ENCODE measurements at regions of chr1 and their contacts with region 1.

Region 1: DNA sequence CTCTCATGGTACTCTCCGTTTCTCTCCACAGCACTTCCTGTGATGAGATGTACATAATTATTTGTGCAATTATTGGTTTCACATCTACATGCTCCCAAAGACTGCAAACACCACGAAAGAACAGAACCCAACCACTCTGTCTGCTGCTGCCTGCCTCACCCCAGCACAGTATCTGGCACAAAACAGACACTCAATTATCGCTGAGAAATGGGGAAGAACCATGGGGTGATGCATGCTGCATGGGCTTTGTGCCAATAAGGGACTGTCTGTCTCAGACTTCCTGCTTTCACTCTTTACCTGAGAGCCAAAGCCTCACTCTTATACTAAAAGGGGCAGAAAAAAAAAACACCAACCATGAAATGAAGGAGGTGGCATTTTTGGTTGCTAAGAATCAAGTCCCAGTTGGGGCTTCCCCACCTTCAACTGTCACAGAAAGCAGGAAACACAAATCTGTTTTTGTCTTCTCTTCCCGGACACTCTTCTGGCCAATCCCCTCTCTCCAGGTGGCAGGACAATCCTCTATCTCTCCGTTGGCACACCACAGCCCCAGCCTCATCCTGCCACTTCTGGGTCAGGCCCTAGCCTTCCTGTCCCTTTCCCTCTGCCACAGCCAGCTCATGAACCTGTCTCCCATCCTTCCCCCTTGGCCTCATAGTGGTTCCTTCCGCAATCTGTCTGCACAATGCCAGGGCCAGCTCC is 82.0 kb downstream of the TGFBR3 start:
- DNase-seq: peak in 2 of 4 experiments; percentile 65 to 83
- ATAC-seq: peak; percentile 75
- H3K4me3 ChIP-seq: no peak overlapping the region
- H3K27ac ChIP-seq: peak overlapping the region; percentile 60
- H3K4me1 ChIP-seq: peaks cover 27 to 29% of the 10 kb centered on the region in 2 experiments
- H3K27me3 ChIP-seq: no peaks in the 10 kb centered on the region
- CTCF ChIP-seq: no peak
- EP300 ChIP-seq: peak; percentile 75; the same call in 1 of the 2 replicates
- POLR2A ChIP-seq: no peak
- RAD21 ChIP-seq: no peak

Region 2: GRCh38 chr1:91500756-91501522 is 303.1 kb before region 1 on chr1 and contains the start of gene CDC7:
- CTCF ChIA-PET with region 1: no interaction called
- POLR2A ChIA-PET with region 1: no interaction called
- in situ Hi-C with region 1: no loop called
- intact Hi-C with region 1: no loop called
- DNase-seq: peak; percentile 95 to 97 (median 96)
- ATAC-seq: peak; percentile 83
- H3K4me3 ChIP-seq: peak within 1 kb of the TSS; percentile 56
- H3K27ac ChIP-seq: peak within 1 kb of the TSS; percentile 97
- H3K4me1 ChIP-seq: peaks cover 0 to 43% of the 10 kb centered on the region in 2 experiments
- H3K27me3 ChIP-seq: no peaks in the 10 kb centered on the region
- CTCF ChIP-seq: peak; percentile 51 to 59 (median 55); a peak in 5 of 6 replicates
- EP300 ChIP-seq: peak; percentile 2; the same call in 1 of the 2 replicates
- POLR2A ChIP-seq: peak; percentile 92
- RAD21 ChIP-seq: peak; percentile 24 to 28
- polyA plus RNA-seq, gene CDC7: 22.3 to 66.8 TPM

Region 3: DNA sequence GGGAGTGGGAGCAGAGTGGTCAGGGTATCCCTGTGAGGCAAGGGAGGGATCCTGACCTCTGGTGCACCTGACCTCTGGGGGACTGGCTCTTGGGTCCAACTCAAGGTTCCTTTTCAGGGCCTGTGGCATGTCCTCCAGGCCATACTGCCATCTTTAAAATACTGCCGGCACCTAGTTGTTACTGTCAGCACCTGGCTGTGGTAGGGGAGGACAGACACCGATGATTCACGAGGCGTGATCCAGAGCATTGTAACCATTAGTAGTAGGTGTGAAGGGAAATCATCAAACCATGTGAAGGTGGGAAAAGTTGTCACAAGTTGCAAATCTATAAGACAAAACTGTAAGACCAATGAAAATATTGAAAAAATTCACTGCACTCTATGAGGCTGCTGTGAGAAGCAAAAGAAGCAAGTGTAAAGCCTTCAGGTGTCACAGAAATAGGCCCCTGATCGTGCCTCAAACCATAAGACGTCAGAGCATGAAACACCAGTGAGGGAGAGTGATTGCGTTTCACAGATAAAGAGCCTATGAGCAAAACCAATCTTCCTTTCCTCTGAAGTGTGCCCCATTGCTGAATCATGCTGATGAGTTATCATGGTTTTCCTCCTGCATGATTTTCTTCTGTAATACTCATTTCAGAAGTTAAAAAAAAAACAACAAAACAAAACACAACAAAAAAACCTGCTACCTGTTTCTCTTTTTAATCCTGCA is 248.0 kb before region 1 on chr1:
- CTCF ChIA-PET with region 1: no interaction called
- POLR2A ChIA-PET with region 1: no interaction called
- in situ Hi-C with region 1: no loop called
- intact Hi-C with region 1: loop called (anchors 1 kb)
- DNase-seq: peak; percentile 33 to 85 (median 62)
- ATAC-seq: peak; percentile 93
- H3K4me3 ChIP-seq: no peak overlapping the region
- H3K27ac ChIP-seq: peak overlapping the region; percentile 56; the same call in 2 of the 3 replicates
- H3K4me1 ChIP-seq: peaks cover 14 to 29% of the 10 kb centered on the region in 2 experiments
- H3K27me3 ChIP-seq: no peaks in the 10 kb centered on the region
- CTCF ChIP-seq: no peak
- EP300 ChIP-seq: peak; percentile 82
- POLR2A ChIP-seq: no peak
- RAD21 ChIP-seq: no peak; a peak in 1 of 4 replicates

Region 4: GRCh38 chr1:91617285-91617765 is 186.7 kb before region 1 on chr1:
- CTCF ChIA-PET with region 1: no interaction called
- POLR2A ChIA-PET with region 1: no interaction called
- in situ Hi-C with region 1: no loop called
- intact Hi-C with region 1: loop called (anchors 5 kb)
- DNase-seq: peak in 3 of 4 experiments; percentile 38 to 63 (median 46)
- ATAC-seq: peak; percentile 97
- H3K4me3 ChIP-seq: no peak overlapping the region
- H3K27ac ChIP-seq: no peak overlapping the region
- H3K4me1 ChIP-seq: no peaks in the 10 kb centered on the region
- H3K27me3 ChIP-seq: no peaks in the 10 kb centered on the region
- CTCF ChIP-seq: peak; percentile 58 to 98 (median 86)
- EP300 ChIP-seq: no peak
- POLR2A ChIP-seq: no peak
- RAD21 ChIP-seq: peak; percentile 42 to 87

Region 5: GRCh38 chr1:91712981-91713841 is 90.8 kb before region 1 on chr1:
- CTCF ChIA-PET with region 1: no interaction called
- POLR2A ChIA-PET with region 1: no interaction called
- in situ Hi-C with region 1: no loop called
- intact Hi-C with region 1: loop called (anchors 5 kb)
- DNase-seq: peak in 1 of 4 experiments; percentile 63
- ATAC-seq: peak; percentile 67
- H3K4me3 ChIP-seq: no peak overlapping the region
- H3K27ac ChIP-seq: peak overlapping the region; percentile 81
- H3K4me1 ChIP-seq: peaks cover 7 to 68% of the 10 kb centered on the region in 2 experiments; a peak in 4 of 5 replicates
- H3K27me3 ChIP-seq: no peaks in the 10 kb centered on the region; a peak in 1 of 5 replicates
- CTCF ChIP-seq: no peak
- EP300 ChIP-seq: peak; percentile 30; the same call in 1 of the 2 replicates
- POLR2A ChIP-seq: 0 out of 2 replicates have a peak, but pooled peaks have one; percentile 26
- RAD21 ChIP-seq: no peak; a peak in 1 of 4 replicates

Region 6: GRCh38 chr1:91885716-91886506 is 81.9 kb after region 1 on chr1 and contains the start of gene TGFBR3:
- CTCF ChIA-PET with region 1: no interaction called
- POLR2A ChIA-PET with region 1: no interaction called
- in situ Hi-C with region 1: no loop called
- intact Hi-C with region 1: loop called (anchors 5 kb)
- DNase-seq: peak; percentile 88 to 92 (median 89)
- ATAC-seq: peak; percentile 92
- H3K4me3 ChIP-seq: peak within 1 kb of the TSS; percentile 92
- H3K27ac ChIP-seq: peak within 1 kb of the TSS; percentile 50
- H3K4me1 ChIP-seq: peaks cover 14 to 21% of the 10 kb centered on the region in 2 experiments; a peak in 4 of 5 replicates
- H3K27me3 ChIP-seq: no peaks in the 10 kb centered on the region
- CTCF ChIP-seq: peak; percentile 39 to 64 (median 46); a peak in 5 of 6 replicates
- EP300 ChIP-seq: no peak
- POLR2A ChIP-seq: peak; percentile 79
- RAD21 ChIP-seq: peak; percentile 42 to 60
- polyA plus RNA-seq, gene TGFBR3: 3.6 to 4.3 TPM

Region 7: GRCh38 chr1:91929250-91929649 is 125.3 kb after region 1 on chr1:
- CTCF ChIA-PET with region 1: no interaction called
- POLR2A ChIA-PET with region 1: no interaction called
- in situ Hi-C with region 1: no loop called
- intact Hi-C with region 1: loop called (anchors 5 kb)
- DNase-seq: no peak
- ATAC-seq: no peak
- H3K4me3 ChIP-seq: no peak overlapping the region
- H3K27ac ChIP-seq: no peak overlapping the region
- H3K4me1 ChIP-seq: no peaks in the 10 kb centered on the region
- H3K27me3 ChIP-seq: no peaks in the 10 kb centered on the region
- CTCF ChIP-seq: no peak
- EP300 ChIP-seq: no peak
- POLR2A ChIP-seq: no peak
- RAD21 ChIP-seq: no peak